Lower leg skin (tissue), 4 donors: ENCODE measurements at regions of chr21 and their contacts with region 1.

Region 1: DNA sequence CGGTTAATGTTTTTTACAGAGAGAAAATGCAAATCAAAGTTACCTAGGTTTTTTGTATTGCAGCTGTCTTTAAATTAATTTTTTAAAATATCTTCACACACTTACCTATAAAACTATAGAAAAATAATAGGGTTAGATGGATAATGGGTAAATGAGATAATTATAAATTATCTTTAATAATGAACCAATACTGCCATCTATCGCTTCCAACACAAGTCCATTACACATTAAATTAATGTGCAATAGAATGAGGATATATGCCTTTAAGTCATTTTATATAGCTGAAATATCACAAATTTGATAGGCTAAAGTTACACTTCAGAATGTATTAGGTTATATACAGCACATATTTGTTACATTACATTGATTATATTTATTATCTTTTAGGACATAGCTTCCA is 2212.8 kb downstream of the MRPL39 start:
- DNase-seq: no peak
- H3K4me3 ChIP-seq: no peak overlapping the region
- CTCF ChIP-seq: no peak
- POLR2A ChIP-seq: no peak

Region 2: DNA sequence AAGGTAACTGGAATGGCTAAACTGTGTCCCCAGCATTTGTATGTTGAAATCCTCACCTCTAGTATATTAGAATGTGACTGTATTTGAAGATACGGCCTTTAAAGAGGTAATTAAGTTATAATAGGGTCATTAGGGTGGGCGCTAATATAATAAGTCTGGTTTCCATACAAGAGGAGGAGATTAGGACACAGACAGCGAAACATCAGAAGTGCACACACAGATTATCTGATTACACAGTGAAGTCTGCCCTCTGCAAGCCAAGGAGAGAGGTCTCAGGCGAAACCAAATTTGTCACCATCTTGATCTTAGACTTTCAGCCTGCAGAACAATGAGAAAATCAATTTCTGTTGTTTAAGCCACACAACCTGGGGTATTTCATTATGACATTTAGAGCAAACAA is 20.3 kb before region 1 on chr21:
- intact Hi-C with region 1: loop called (anchors 2 kb)
- DNase-seq: no peak
- H3K4me3 ChIP-seq: no peak overlapping the region
- CTCF ChIP-seq: no peak
- POLR2A ChIP-seq: no peak